ENCODE measurements at regions of chr11 and their contacts with region 1.

Region 1: GRCh38 chr11:79466411-79466810 is 25.6 kb upstream of the TENM4 start:
- DNase-seq: no peak
- ATAC-seq: no peak
- H3K4me3 ChIP-seq: no peak overlapping the region
- H3K4me3 Mint-ChIP-seq: no peak overlapping the region
- H3K27ac ChIP-seq: no peak overlapping the region
- H3K27ac Mint-ChIP-seq: no peak overlapping the region
- H3K4me1 ChIP-seq: no peaks in the 10 kb centered on the region
- H3K4me1 Mint-ChIP-seq: no peaks in the 10 kb centered on the region
- H3K27me3 ChIP-seq: no peaks in the 10 kb centered on the region
- H3K27me3 Mint-ChIP-seq: peaks cover 0 to 8% (median 4%) of the 10 kb centered on the region in 5 donors

Region 2: DNA sequence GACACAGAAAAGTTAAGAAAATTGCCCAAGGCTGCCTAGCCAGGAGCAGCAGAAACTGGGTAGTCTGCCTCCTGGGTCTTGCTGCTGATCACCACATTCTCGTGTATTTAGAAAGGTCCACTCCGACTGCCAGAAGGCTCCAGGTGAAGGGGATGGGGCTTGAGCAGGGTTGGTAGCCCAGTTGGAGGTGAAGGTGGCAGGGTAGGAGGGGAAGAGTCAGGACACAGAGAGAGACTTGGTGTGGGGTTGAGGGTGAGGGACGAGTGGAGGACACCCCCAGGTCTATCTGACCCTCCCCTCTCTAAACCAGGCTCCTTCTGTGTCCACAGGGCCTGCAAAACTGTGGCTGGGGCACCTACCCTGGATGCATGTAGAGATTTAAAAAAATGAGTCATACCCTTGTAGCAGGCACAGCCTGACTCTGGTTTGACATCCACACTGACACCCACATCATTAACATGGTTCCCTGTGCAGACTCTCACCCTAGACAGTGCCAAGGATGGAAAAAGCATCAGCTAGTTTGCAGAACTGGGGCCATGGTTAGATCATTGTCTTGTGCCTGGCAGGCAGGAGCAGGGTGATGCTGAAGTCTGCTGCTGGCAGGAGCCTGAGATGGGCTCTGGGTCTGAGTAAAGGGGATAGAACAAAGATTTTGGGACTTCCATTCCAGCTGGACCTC is 298.8 kb before region 1 on chr11:
- CTCF ChIA-PET with region 1: no interaction called
- POLR2A ChIA-PET with region 1: no interaction called
- intact Hi-C with region 1: loop called in 1 of 2 experiments (anchors 5 kb)
- DNase-seq: no peak
- ATAC-seq: no peak
- H3K4me3 ChIP-seq: no peak overlapping the region
- H3K4me3 Mint-ChIP-seq: no peak overlapping the region
- H3K27ac ChIP-seq: no peak overlapping the region
- H3K27ac Mint-ChIP-seq: no peak overlapping the region
- H3K4me1 ChIP-seq: no peaks in the 10 kb centered on the region
- H3K4me1 Mint-ChIP-seq: no peaks in the 10 kb centered on the region
- H3K27me3 ChIP-seq: no peaks in the 10 kb centered on the region
- H3K27me3 Mint-ChIP-seq: peaks cover 0 to 21% (median 4%) of the 10 kb centered on the region in 5 donors

Region 3: DNA sequence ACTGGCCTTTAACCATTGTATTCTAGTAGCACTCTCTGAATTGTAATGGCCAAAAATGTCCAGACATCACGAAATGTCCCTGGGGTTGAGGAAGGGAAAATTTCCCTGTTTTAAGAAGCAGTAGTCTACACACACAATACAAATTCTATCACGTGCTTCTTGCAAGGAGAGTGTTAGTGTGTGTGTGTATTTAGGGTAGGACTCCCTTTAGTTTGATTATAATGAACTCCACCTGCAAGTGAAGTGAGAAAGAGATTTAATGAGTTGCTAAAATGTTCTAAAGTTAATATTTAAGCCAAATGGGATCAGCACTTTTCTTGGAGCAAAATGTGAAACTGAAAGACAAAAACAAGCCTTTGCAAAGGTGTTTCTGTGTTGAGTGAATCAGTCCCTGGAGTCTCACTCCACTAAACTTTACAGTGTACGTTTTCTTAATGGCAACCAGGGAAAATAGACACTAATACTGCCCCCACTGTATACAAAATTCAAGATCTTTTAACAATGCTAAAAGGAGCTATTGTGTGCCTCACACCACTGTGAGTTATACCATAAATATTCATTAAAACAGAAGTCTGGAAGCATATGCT is 564.7 kb after region 1 on chr11:
- CTCF ChIA-PET with region 1: no interaction called
- POLR2A ChIA-PET with region 1: no interaction called
- intact Hi-C with region 1: no loop called
- DNase-seq: no peak
- ATAC-seq: no peak
- H3K4me3 ChIP-seq: no peak overlapping the region
- H3K4me3 Mint-ChIP-seq: no peak overlapping the region
- H3K27ac ChIP-seq: no peak overlapping the region
- H3K27ac Mint-ChIP-seq: no peak overlapping the region
- H3K4me1 ChIP-seq: no peaks in the 10 kb centered on the region
- H3K4me1 Mint-ChIP-seq: no peaks in the 10 kb centered on the region
- H3K27me3 ChIP-seq: no peaks in the 10 kb centered on the region
- H3K27me3 Mint-ChIP-seq: no peaks in the 10 kb centered on the region

Measured in naive thymus-derived CD4-positive, alpha-beta T cell (primary cell).